Activated naive CD4-positive, alpha-beta T cell treated with anti-CD3 and anti-CD28 coated beads for 36 hours (primary cell): ENCODE measurements at regions of chr5 and their contacts with region 1.

Region 1: DNA sequence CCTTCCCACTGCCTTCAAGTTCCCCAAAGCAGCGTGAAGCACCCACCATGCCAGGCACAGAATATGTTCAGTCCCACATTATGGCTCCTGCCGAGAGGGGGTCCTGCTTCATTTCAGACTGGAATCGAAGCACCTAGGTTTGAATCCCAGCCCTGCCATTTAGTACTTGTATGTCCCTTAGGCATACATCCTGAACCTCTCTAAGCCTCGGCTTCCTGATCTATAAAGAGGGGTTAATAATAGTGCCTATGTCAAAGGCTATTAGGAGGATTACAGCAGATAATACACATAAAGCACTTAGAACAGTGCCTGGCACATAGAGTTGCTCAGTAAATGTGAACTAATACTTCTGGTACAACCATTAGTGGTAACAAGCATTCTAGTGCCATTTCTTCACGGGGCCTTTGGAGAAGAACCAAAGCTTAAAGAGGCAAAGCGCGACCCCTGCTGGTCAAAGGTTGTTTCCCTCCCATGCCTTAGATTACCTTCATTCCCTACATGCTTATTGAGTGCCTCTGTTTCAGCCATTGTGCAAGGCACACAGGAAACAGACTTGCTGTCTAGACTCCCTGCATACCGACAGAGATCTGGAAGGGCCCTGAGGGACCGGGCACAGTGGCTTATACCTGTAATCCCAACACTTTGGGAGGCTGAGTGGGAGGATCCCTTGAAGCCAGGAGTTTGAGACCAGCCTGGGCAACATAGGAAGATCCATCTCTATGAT is 98.2 kb downstream of the PPARGC1B start:
- DNase-seq: peak; percentile 93
- H3K4me3 Mint-ChIP-seq: no peak overlapping the region
- H3K27ac Mint-ChIP-seq: no peak overlapping the region
- H3K4me1 Mint-ChIP-seq: peaks cover 7% of the 10 kb centered on the region
- H3K27me3 Mint-ChIP-seq: no peaks in the 10 kb centered on the region

Region 2: DNA sequence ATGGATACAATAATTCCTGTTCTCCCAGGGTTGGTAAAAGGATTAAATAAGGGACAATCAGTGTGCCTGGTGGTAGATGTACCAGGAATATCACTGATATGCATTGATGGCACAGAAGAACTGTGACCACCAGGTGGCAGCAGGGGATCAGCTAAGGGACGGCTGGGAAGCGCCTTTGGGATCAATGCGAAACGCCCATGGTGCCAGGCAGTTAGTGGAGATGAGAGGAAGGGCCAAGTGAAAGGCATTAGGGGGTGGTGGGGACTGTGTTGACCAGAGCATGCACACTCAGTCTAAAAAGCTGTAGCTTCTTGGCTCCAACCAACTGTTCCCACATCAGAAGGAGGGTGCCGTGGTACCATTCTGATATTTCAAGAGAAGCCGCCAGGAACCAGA is 191.5 kb before region 1 on chr5:
- CTCF ChIA-PET with region 1: interaction called, 75 read pairs
- intact Hi-C with region 1: loop called (anchors 1 kb)
- DNase-seq: peak; percentile 82
- H3K4me3 Mint-ChIP-seq: no peak overlapping the region
- H3K27ac Mint-ChIP-seq: no peak overlapping the region
- H3K4me1 Mint-ChIP-seq: peaks cover 13% of the 10 kb centered on the region
- H3K27me3 Mint-ChIP-seq: no peaks in the 10 kb centered on the region

Region 3: DNA sequence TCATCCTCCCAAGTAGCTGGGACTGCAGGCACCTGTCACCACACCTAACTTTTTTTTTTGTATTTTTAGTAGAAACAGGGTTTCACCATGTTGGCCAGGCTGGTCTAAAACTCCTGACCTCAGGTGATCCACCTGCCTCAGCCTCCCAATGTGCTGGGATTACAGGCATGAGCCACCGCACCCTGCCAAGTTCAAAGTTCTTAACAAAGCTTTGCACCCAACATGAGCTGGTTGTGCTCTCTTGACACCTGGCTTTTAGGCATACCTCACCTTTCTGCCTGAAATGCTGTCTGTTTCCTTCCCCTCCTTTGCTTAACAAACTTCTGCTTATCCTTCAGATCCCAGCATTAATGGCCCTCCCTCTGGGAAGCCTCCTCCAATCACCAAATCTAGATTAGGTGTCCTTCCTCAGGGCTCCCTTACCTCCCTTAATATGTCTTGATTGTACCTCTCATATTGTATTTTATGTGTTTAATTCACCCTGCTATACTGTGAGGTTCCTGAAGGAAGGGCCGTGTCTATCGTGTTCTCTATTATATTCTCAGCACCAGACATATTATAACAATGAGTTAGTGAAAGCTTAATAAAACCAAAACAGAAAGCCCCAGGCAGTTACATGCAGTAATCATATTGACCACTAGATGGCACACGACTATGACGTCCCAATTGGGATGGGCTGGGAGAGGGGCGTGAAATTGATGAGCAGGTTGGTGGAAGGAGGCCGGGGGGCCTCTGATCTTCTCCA is 161.1 kb before region 1 on chr5:
- CTCF ChIA-PET with region 1: interaction called, 62 read pairs
- intact Hi-C with region 1: loop called (anchors 1 kb)
- DNase-seq: peak; percentile 49
- H3K4me3 Mint-ChIP-seq: no peak overlapping the region
- H3K27ac Mint-ChIP-seq: no peak overlapping the region
- H3K4me1 Mint-ChIP-seq: no peaks in the 10 kb centered on the region
- H3K27me3 Mint-ChIP-seq: no peaks in the 10 kb centered on the region

Region 4: DNA sequence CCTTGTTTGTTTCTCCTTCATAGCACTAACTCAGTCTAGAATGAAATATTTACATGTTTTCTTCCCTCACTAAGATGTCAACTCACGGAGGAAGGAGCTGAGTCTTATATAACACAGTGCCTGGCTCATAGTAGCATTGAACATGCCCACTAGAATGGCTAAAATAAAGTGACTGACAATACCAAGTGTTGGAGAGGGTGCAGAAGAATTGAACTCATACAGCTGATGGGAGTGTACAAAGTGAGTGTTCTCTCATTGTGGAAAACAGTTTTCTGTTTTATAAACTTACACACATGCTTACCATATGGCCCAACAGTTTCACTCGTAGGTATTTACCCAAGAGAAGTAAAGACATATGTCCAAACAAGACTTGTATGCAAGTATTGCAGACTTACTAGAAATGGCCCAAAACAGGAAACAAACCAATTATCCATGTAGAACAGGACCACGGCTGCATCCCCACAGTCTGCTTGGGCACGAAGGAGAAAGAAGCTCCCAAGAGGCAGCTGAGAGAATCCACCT is 10.7 kb before region 1 on chr5:
- CTCF ChIA-PET with region 1: interaction called, 18 read pairs
- intact Hi-C with region 1: no loop called
- DNase-seq: no peak
- H3K4me3 Mint-ChIP-seq: no peak overlapping the region
- H3K27ac Mint-ChIP-seq: no peak overlapping the region
- H3K4me1 Mint-ChIP-seq: no peaks in the 10 kb centered on the region
- H3K27me3 Mint-ChIP-seq: no peaks in the 10 kb centered on the region

Region 5: GRCh38 chr5:149990518-149991376 is 162.4 kb after region 1 on chr5:
- CTCF ChIA-PET with region 1: interaction called, 84 read pairs
- intact Hi-C with region 1: no loop called
- DNase-seq: peak; percentile 83
- H3K4me3 Mint-ChIP-seq: no peak overlapping the region
- H3K27ac Mint-ChIP-seq: no peak overlapping the region
- H3K4me1 Mint-ChIP-seq: no peaks in the 10 kb centered on the region
- H3K27me3 Mint-ChIP-seq: no peaks in the 10 kb centered on the region

Region 6: DNA sequence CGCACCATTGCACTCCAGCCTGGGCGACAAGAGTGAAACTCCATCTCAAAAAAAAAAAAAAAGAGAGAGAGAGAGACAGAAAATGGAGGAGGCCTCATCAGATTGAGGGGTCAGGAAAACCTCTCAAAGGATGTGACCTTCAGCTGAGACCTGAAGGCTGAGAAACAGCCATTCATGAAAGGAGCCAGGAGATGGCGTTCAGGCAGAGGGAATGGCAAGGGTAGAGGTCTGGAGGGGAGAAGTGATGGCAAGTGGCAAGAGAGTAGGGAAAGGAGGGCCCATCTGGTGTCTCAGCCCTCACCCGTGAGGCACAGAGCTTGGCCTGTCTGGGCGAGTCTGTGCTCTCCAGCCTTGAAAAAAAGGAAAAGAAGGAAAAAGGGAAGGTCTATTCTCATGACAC is 444.2 kb after region 1 on chr5:
- CTCF ChIA-PET with region 1: no interaction called
- intact Hi-C with region 1: no loop called
- DNase-seq: peak; percentile 32
- H3K4me3 Mint-ChIP-seq: no peak overlapping the region
- H3K27ac Mint-ChIP-seq: no peak overlapping the region
- H3K4me1 Mint-ChIP-seq: no peaks in the 10 kb centered on the region
- H3K27me3 Mint-ChIP-seq: no peaks in the 10 kb centered on the region